Left ventricle myocardium inferior (tissue), 1 donor: ENCODE measurements at regions of chr17 and their contacts with region 1.

Region 1: DNA sequence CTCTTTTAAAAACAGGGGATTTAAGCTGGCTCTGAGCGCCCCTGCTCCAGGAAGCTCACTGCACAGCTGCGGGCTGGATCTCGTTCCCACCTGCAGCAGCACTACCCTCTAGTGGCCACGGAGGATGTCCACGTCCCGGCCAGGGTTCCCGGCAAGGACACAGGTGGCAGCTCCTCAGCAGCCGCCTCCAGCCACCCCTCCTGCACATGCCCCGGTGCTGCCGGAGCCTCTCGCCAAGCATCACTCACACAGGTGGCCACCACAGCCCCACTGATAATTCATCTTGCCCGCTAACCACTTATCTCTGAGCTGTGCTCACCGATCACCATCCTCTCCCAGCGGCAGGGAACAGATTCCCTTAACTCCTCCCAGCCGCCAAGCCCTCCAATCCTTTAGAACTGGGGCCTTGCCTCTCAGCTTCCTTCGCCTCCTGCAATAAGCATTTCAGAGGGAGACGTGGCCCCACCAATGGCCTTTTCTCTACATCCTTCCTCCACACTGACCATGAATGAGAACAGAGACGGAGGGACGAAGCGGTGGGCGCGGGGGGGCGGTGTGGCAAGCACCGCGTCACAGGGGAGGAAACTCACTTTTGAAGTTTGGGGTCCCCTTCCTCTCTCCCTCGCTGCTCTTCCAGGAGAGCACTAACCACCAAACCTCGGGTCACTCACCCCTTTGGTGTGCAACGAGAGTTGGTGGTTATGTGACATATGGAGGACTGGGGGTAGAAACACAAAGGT is 222.1 kb downstream of the RBFOX3 start:
- DNase-seq: peak; percentile 50
- H3K4me3 ChIP-seq: no peak overlapping the region
- H3K27ac ChIP-seq: no peak overlapping the region
- H3K4me1 ChIP-seq: no peaks in the 10 kb centered on the region
- H3K27me3 ChIP-seq: peaks cover 93% of the 10 kb centered on the region
- CTCF ChIP-seq: peak; percentile 77

Region 2: DNA sequence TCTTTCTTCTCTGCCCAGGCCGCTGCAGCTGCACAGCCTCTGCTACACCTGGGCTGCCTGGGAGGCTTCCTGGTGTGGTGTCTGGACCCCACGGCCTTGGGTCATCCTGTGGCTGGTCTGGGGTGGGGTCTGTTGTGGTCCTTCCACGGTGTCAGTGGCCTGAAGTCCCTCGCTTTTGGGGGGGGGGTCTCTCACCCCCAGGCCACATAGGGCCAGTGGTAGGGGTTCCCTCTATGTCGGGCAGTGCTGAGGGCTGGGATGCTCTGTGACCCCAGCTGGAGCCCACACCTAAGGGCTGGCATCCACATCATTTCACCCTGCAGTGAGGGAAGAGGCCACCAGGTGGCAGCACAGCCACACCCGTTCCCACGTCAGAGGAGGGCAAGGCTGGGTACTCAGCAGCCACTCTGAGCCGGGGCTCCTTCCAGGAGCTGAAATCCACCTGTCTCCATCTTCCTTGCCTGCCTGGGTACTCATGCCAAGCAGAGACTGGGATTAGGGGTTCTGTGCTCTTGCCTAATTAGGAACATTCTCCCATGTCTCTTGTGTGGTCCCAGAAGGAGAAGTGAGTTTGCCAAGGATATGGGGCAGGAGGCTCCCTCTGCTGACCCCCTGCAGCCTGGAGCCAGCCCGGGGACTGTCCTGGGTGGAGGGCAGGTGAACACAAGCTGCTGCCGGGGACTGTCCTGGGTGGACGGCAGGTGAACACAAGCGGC is 301.1 kb before region 1 on chr17:
- intact Hi-C with region 1: loop called (anchors 5 kb)
- DNase-seq: peak; percentile 57
- H3K4me3 ChIP-seq: no peak overlapping the region
- H3K27ac ChIP-seq: no peak overlapping the region
- H3K4me1 ChIP-seq: peaks cover 27% of the 10 kb centered on the region
- H3K27me3 ChIP-seq: peaks cover 16% of the 10 kb centered on the region
- CTCF ChIP-seq: peak; percentile 97

Region 3: DNA sequence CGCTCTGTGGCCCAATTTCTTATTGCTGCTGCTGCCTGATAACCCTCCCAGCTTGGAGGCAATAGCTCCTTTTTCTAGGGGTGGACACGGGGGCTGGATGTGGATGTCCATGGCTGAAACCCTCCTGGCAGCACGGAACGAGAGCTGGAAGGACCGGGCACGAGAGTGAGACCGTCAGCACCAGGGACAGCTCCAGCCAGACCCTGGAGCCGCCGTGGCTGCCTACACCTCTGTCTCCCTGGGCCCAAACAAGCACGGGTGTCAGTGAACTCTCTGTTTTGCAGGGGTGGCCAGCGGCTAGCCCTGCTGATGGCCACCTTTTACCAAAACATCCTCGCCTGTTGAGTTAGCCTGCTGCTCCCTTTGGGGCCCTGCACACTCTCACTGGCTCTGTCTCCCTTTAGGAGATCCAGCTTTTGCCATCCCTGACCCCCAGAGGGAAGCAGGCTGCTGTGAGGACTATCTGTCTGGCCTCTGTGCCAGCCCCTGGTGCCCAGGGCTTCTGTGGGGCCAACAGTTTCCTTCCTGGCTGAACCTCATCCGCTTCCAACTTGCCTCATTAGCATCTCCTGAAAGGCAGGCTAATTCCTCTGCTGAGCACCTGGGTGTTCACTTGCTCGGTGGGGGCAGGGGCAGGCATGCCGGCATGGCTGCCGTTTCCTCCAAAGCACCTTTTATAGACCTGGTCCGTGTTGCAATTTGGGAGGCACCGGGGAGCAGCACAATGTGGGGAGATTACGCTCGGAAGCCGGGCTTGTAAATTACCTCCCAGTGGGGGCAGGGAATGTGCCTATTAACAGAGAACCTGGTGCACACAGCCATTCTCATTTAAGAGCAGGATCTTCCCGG is 196.0 kb before region 1 on chr17:
- intact Hi-C with region 1: loop called (anchors 5 kb)
- DNase-seq: peak; percentile 29
- H3K4me3 ChIP-seq: no peak overlapping the region
- H3K27ac ChIP-seq: no peak overlapping the region
- H3K4me1 ChIP-seq: no peaks in the 10 kb centered on the region
- H3K27me3 ChIP-seq: peaks cover 96% of the 10 kb centered on the region
- CTCF ChIP-seq: no peak